ENCODE measurements at regions of chr15 and their contacts with region 1.

Region 1: DNA sequence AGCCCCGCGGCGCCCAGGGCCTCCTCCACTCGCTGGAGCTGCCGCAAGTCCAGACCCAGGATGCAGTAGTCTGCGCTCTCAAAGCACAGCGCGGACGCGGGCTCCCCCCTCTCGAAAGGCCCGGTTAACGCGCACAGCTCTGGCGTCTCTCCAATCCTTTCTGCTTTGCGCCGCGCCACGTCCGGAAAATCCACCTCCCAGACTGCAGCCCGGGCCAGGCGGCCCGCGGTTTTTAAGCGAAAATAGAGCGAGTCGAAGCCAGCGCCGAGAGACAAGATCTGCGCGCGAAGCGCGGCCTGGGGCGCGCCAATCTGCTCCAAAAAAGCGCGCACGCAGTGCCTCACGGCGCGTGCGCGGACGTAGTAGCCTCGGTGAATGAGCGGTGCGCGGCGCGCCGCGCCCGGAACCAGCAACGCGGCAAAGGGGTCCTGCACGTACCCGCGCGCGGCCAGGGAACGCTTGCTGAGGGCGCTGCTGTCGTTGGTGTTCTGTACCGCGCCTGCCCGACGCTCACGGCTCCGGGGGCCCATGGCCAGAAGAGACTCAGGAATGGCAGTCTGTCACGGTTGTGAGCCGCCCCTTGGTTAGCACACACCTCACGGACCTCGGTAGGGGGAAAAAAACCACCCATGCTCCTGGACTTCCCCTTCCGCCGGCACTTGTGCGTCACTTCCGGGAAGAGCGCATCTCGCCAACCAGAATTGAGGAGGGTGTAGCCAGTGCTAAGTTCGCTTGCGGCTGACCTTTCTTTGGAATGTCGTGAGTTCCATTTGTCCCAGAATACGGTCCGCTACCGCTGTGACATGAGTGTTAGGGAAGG is at the start of gene LCMT2:
- DNase-seq: peak; percentile 91 to 94
- H3K4me3 ChIP-seq: peak within 1 kb of the TSS; percentile 63
- H3K4me3 Mint-ChIP-seq: peak within 1 kb of the TSS; percentile 87
- H3K27ac Mint-ChIP-seq: peak within 1 kb of the TSS; percentile 94
- H3K4me1 ChIP-seq: 0 out of 2 replicates have a peak, but pooled peaks cover 6% of the 10 kb centered on the region
- H3K4me1 Mint-ChIP-seq: peaks cover 8% of the 10 kb centered on the region
- H3K27me3 ChIP-seq: no peaks in the 10 kb centered on the region
- H3K27me3 Mint-ChIP-seq: no peaks in the 10 kb centered on the region
- CTCF ChIP-seq: no peak
- total RNA-seq, gene LCMT2: 7.4 and 7.9 TPM in 2 replicates

Region 2: DNA sequence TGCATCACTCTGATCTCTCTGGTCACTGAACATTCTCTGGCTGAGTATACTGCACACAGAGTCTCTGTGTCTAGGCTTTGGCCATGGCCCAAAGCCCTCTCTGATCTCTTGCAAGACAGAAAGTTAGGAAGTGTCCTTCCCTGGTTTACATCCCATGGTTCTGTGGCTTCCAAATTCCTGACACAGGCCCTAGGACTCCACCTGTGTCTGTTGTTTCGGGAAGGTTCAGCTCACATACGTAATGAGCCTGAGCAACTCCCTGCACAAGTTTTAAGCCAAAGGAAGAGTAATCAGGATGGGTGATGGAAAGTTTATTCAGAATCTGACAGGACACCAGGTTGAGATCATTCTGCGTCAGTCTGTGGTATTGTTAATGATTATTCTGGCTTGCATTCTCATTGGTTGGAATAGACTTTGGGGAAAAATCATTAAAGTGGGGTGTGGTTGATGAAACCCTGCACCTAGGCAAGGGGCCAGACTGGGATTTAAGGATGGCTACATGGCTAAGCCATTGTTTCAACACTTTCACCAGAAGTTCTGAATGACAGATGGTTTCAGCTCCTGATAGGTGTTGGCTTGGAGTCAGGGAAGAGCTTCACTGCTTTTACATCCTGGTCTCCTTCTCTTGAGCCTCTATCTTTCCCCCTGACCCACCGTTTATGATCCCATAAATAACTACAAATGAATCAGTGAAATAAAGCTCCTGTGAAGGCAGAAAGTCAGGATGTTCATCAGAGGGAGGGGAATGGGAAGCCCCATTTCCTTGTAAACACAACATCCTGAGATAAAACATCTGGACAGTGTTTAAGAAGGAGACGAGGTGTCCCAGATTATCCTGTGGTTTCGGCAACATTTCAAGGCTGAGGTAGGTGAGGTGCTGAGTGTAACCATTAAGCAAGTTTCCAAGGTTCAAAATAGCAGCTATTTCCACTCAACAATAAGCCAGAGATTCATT is 13.9 kb before region 1 on chr15:
- CTCF ChIA-PET with region 1: no interaction called
- POLR2A ChIA-PET with region 1: no interaction called
- intact Hi-C with region 1: no loop called
- DNase-seq: no peak
- H3K4me3 ChIP-seq: no peak overlapping the region
- H3K4me3 Mint-ChIP-seq: no peak overlapping the region
- H3K27ac Mint-ChIP-seq: no peak overlapping the region
- H3K4me1 ChIP-seq: no peaks in the 10 kb centered on the region
- H3K4me1 Mint-ChIP-seq: no peaks in the 10 kb centered on the region
- H3K27me3 ChIP-seq: no peaks in the 10 kb centered on the region
- H3K27me3 Mint-ChIP-seq: peaks cover 6% of the 10 kb centered on the region
- CTCF ChIP-seq: no peak

Region 3: GRCh38 chr15:43370975-43371974 is 41.1 kb after region 1 on chr15 and contains the starts of genes TUBGCP4 and ZSCAN29:
- CTCF ChIA-PET with region 1: no interaction called
- POLR2A ChIA-PET with region 1: interaction called, 4 read pairs
- intact Hi-C with region 1: loop called (anchors 1 kb)
- DNase-seq: peak; percentile 86 to 91
- H3K4me3 ChIP-seq: peak within 1 kb of the TSS; percentile 77
- H3K4me3 Mint-ChIP-seq: peak within 1 kb of the TSS; percentile 93
- H3K27ac Mint-ChIP-seq: peak within 1 kb of the TSS; percentile 93
- H3K4me1 ChIP-seq: peaks cover 10% of the 10 kb centered on the region
- H3K4me1 Mint-ChIP-seq: peaks cover 14% of the 10 kb centered on the region
- H3K27me3 ChIP-seq: no peaks in the 10 kb centered on the region
- H3K27me3 Mint-ChIP-seq: no peaks in the 10 kb centered on the region
- CTCF ChIP-seq: peak; percentile 50 to 77
- total RNA-seq, gene TUBGCP4: 28.4 and 29.2 TPM in 2 replicates
- total RNA-seq, gene ZSCAN29: 39.4 and 43.0 TPM in 2 replicates

Region 4: DNA sequence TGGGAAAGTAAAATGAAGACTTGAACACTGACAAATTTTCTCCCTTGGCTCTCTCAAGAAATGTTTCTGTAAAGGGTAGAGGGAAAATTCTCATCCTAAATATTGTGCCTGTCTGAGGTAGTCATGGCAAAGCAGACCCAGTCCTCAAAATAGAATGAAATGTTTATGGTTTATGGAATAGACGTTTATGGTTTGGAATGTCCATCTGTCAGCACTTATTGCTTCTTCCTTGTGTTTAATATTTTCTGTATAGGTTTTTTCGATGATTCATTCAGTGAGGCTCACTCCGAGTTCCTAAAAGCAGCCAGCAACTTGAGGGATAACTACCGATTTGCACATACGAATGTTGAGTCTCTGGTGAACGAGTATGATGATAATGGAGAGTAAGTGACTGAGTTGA is 432.7 kb after region 1 on chr15:
- CTCF ChIA-PET with region 1: no interaction called
- POLR2A ChIA-PET with region 1: no interaction called
- intact Hi-C with region 1: loop called (anchors 5 kb)
- DNase-seq: no peak
- H3K4me3 ChIP-seq: no peak overlapping the region
- H3K4me3 Mint-ChIP-seq: no peak overlapping the region
- H3K27ac Mint-ChIP-seq: no peak overlapping the region
- H3K4me1 ChIP-seq: no peaks in the 10 kb centered on the region
- H3K4me1 Mint-ChIP-seq: no peaks in the 10 kb centered on the region
- H3K27me3 ChIP-seq: no peaks in the 10 kb centered on the region
- H3K27me3 Mint-ChIP-seq: no peaks in the 10 kb centered on the region
- CTCF ChIP-seq: no peak

Measured in Caco-2 (cell line).